ENCODE measurements at regions of chr16 and their contacts with region 1.

Region 1: DNA sequence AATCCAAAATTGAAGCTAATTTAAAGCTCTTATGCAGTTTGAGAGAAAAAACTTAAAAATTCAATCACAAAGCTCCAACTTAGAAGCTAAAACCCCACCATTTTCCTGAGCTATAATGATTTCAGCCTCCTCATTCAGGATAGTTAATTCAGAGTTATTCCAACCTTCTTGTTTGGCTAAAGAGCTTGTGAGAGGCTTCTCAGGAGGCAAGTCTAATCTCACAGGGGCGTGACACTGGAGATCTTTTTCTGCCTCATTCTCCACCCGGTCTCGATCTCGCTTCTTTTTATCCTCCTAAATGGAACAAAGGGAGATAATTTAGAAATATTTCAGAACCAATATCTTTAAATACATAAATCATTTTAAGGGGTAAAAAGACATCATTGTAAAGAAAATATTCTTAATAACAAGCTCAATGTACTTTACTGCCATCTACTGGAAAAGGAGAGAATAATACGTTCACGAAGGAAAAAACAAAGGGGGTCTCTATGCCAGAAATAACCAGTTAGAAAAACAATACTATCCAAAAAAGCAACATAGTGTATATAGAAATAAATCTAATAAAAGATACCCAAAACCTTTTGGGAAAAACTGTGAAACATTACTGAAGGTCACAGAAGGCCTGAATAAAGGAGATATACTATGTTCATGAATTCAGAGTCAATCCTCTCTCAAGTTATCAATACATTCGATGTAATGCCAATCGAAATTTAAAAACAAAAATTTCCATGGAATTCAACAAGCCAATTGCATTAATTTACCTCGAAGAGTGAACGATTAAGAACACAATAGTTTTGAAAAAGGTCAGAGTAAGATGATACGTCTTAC is 13.9 kb downstream of the BRD7 start:
- DNase-seq: no peak
- CTCF ChIP-seq: peak; percentile 40

Region 2: GRCh38 chr16:50011707-50012106 is 343.1 kb before region 1 on chr16:
- CTCF ChIA-PET with region 1: no interaction called
- POLR2A ChIA-PET with region 1: no interaction called
- DNase-seq: no peak
- CTCF ChIP-seq: no peak

Region 3: DNA sequence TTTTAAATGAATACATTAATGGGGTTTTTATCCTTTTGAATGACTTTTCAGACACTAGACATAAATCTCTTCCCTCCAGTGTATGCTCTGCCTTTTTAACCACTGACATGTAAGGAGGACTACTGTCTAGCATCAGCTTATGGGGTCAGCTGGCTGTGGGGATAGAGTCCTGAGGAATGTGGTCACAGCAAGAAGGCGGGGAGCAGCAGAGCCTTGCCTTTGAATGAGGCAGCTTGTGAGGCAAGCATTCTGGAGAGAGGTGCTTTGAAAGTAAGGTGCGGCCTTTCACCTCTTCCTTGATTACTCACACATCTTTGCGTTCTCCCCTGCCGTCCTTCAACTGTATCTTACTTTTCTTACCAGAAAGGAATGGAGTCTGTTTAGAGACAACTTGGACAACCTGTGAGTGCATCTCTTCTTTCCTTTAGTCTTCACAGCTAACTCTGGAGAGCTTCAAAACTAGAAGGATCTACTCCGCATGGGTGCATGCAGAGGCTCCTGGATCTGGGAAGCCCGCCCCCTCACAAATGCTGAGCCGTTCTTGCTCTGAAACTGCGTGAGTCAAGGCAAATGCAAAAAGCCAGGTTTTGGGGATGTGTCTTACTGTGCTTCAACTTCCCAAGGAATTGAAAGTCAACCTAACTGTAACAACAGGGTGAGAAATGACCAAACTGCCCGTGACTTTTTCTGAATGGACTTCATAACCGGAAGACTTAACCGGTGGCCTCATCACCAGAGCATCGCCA is 38.6 kb before region 1 on chr16:
- CTCF ChIA-PET with region 1: no interaction called
- POLR2A ChIA-PET with region 1: no interaction called
- DNase-seq: no peak
- CTCF ChIP-seq: no peak

Region 4: DNA sequence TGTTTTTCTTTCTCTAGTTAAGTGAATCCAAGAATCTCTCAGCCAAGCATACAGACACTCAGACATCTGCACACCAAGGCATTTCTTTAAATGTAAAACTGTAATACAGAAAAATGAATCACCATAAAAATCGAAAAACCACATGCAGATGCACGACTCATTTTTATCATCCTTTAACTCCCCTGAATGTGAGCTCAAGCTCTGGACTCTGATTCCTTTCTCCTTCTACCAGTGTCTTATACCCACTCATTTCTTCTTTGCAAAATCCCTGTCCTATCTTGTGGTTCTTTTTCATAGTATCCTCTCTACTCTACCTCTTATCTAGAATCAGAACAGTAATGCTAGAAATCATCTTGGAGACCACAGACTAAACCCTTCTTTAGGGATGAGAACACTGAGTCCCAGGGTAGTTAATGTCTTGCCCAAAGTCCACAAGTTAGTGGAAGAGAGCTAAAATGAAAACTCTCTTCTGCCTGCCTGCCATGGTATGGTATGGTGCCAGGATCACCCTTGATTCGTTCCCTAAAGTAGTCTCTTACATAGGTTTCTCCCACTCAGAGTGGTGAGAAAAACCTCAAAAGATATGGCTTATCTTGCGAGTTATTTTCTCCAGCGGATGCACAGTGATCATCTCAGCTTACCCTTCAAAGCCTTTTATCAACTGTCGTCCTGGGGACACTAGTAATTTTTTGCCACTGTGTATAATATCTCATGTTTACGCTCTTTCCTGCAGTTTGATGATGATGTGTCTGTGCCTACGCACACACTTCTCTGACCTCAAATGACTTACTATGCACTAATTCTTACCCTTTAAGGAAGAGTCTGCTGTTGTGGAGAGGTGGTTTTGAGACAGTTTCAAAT is 16.2 kb before region 1 on chr16:
- CTCF ChIA-PET with region 1: interaction called, 41 read pairs
- POLR2A ChIA-PET with region 1: no interaction called
- DNase-seq: no peak
- CTCF ChIP-seq: no peak

Region 5: GRCh38 chr16:50368410-50369132 is 13.7 kb after region 1 on chr16 and contains the start of gene BRD7:
- CTCF ChIA-PET with region 1: interaction called, 103 read pairs
- POLR2A ChIA-PET with region 1: no interaction called
- DNase-seq: peak; percentile 93
- CTCF ChIP-seq: peak; percentile 69

Region 6: GRCh38 chr16:50425648-50426047 is 70.8 kb after region 1 on chr16:
- CTCF ChIA-PET with region 1: no interaction called
- POLR2A ChIA-PET with region 1: no interaction called
- DNase-seq: no peak
- CTCF ChIP-seq: no peak